Heart right ventricle (tissue), 16 donors: ENCODE measurements at regions of chr19 and their contacts with region 1.

Region 1: DNA sequence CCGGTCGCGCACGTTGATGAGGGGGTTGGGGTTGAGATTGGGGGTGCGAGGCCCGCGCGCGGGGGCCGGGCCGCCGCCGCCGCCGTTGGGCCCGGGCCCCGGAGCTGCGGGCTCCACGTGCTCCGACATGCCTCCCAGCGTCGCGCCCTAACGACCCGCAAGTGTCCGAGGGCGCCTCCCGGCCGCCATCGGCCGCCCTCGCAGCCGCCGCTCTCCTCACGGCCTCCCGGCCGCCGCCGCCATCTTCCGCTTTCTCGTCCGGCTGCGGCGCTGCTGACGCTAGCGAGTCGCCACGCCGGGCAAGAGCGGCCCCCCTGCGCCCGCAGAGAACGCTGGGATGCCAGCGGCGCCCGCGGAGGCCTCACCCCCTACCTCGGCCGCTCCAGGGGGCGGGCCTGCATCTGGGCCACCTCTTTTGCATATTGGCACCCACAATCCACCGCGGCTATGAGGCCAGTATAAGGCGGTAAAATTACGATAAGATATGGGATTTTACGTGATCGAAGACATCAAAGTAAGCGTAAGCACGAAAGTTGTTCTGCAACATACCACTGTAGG is at the start of gene TMEM259:
- DNase-seq: peak; percentile 97
- ATAC-seq: peak; percentile 88 to 94 (median 92)
- H3K4me3 ChIP-seq: peak within 1 kb of the TSS; percentile 54 to 91 (median 78)
- H3K27ac ChIP-seq: peak within 1 kb of the TSS; percentile 86 to 97 (median 92)
- H3K4me1 ChIP-seq: peaks cover 41 to 66% (median 58%) of the 10 kb centered on the region in 9 donors
- H3K27me3 ChIP-seq: no peaks in the 10 kb centered on the region
- CTCF ChIP-seq: no peak
- total RNA-seq, gene TMEM259: 94.3 to 141 (median 111) TPM

Region 2: GRCh38 chr19:925526-926322 is 95.2 kb before region 1 on chr19 and contains the start of gene ARID3A:
- intact Hi-C with region 1: no loop called
- DNase-seq: peak; percentile 77 to 81
- ATAC-seq: peak; percentile 76 to 84 (median 80)
- H3K4me3 ChIP-seq: peak within 1 kb of the TSS; percentile 51 to 99 (median 84)
- H3K27ac ChIP-seq: peak within 1 kb of the TSS in 9 of 10 donors; percentile 54 to 98 (median 85)
- H3K4me1 ChIP-seq: peaks cover 7 to 52% (median 20%) of the 10 kb centered on the region in 9 donors
- H3K27me3 ChIP-seq: peaks cover 4 to 9% (median 8%) of the 10 kb centered on the region in 7 donors
- CTCF ChIP-seq: no peak
- total RNA-seq, gene ARID3A: 3.0 to 11.7 (median 5.3) TPM

Region 3: GRCh38 chr19:984165-984967 is 36.6 kb before region 1 on chr19 and contains the start of gene WDR18:
- intact Hi-C with region 1: loop called in 1 of 10 experiments (anchors 1 kb)
- DNase-seq: peak; percentile 94 to 95
- ATAC-seq: peak; percentile 92 to 97 (median 96)
- H3K4me3 ChIP-seq: peak within 1 kb of the TSS; percentile 49 to 99 (median 94)
- H3K27ac ChIP-seq: peak within 1 kb of the TSS in 9 of 10 donors; percentile 77 to 92 (median 87)
- H3K4me1 ChIP-seq: peaks cover 4 to 36% (median 22%) of the 10 kb centered on the region in 9 donors
- H3K27me3 ChIP-seq: no peaks in the 10 kb centered on the region
- CTCF ChIP-seq: peak in 6 of 9 donors; percentile 14 to 48 (median 35)
- total RNA-seq, gene WDR18: 17.3 to 25.0 (median 20.3) TPM

Region 4: GRCh38 chr19:1039646-1040475 is 18.9 kb after region 1 on chr19 and contains the start of gene ABCA7:
- intact Hi-C with region 1: no loop called
- DNase-seq: peak; percentile 98 to 100
- ATAC-seq: peak; percentile 91 to 97 (median 96)
- H3K4me3 ChIP-seq: peak within 1 kb of the TSS; percentile 30 to 73 (median 61)
- H3K27ac ChIP-seq: peak within 1 kb of the TSS in 6 of 10 donors; percentile 19 to 92 (median 48)
- H3K4me1 ChIP-seq: peaks cover 5 to 56% (median 29%) of the 10 kb centered on the region in 9 donors
- H3K27me3 ChIP-seq: no peaks in the 10 kb centered on the region
- CTCF ChIP-seq: peak in 2 of 9 donors; percentile 6 to 13
- total RNA-seq, gene ABCA7: 4.3 to 18.1 (median 5.6) TPM

Region 5: DNA sequence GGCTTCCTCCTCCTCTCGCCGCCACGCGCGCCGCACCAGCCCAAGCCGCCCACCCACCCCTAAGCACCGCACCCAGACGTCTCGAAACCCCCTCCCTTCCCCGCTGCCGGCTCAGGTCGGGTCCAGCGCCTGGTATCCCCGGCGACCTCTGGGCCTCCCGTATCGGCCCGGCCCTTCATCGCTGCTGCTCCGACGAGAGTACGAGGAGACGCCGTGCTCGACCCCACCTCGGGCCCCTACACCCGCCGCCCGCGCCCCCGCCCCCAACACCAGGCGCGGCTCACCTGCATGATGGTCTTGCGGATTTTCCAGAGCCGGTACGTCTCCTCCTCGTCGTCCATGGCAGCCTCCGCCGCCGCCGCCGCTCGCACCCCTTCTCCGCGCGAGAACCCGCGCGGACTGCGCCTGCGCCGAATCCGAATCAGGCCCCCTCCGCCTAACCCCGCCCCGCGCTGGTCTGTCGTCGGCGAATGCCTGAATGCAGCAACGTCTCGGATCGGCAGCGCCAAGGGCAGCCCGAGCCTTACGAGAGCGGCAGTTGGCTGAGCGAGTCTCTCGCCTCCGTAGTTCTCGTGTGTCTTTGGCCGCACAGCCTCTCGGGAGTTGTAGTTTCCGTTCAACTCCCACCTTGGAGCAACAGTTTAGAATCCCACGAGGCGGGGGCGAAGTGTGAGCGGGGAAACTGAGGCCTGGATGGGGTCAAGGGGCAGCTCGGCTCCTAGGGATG is 74.2 kb after region 1 on chr19 and contains the start of gene POLR2E:
- intact Hi-C with region 1: loop called in 5 of 10 experiments (anchors 5 kb)
- DNase-seq: peak; percentile 98 to 99
- ATAC-seq: peak; percentile 95 to 98 (median 97)
- H3K4me3 ChIP-seq: peak within 1 kb of the TSS; percentile 72 to 98 (median 84)
- H3K27ac ChIP-seq: peak within 1 kb of the TSS in 9 of 10 donors; percentile 58 to 92 (median 86)
- H3K4me1 ChIP-seq: peaks cover 5 to 60% (median 38%) of the 10 kb centered on the region in 9 donors
- H3K27me3 ChIP-seq: no peaks in the 10 kb centered on the region
- CTCF ChIP-seq: no peak
- total RNA-seq, gene POLR2E: 111 to 215 (median 134) TPM

Region 6: GRCh38 chr19:1103708-1104310 is 82.9 kb after region 1 on chr19 and contains the start of gene GPX4:
- intact Hi-C with region 1: loop called in 6 of 10 experiments (anchors 2 to 5 kb)
- DNase-seq: peak; percentile 99
- ATAC-seq: peak; percentile 82 to 92 (median 90)
- H3K4me3 ChIP-seq: peak within 1 kb of the TSS; percentile 40 to 96 (median 82)
- H3K27ac ChIP-seq: peak within 1 kb of the TSS; percentile 88 to 100 (median 98)
- H3K4me1 ChIP-seq: peaks cover 30 to 78% (median 66%) of the 10 kb centered on the region in 9 donors
- H3K27me3 ChIP-seq: no peaks in the 10 kb centered on the region
- CTCF ChIP-seq: no peak
- total RNA-seq, gene GPX4: 244 to 405 (median 299) TPM